Thyroid gland (tissue), 4 donors: ENCODE measurements at regions of chr4 and their contacts with region 1.

Region 1: GRCh38 chr4:41692717-41693345 is 55.7 kb downstream of the PHOX2B start:
- DNase-seq: peak; percentile 12 to 16
- H3K4me3 ChIP-seq: no peak overlapping the region
- H3K27ac ChIP-seq: no peak overlapping the region
- H3K4me1 ChIP-seq: peaks cover 0 to 5% of the 10 kb centered on the region in 2 donors
- H3K27me3 ChIP-seq: no peaks in the 10 kb centered on the region
- CTCF ChIP-seq: peak; percentile 30 to 71 (median 50)
- POLR2A ChIP-seq: no peak

Region 2: DNA sequence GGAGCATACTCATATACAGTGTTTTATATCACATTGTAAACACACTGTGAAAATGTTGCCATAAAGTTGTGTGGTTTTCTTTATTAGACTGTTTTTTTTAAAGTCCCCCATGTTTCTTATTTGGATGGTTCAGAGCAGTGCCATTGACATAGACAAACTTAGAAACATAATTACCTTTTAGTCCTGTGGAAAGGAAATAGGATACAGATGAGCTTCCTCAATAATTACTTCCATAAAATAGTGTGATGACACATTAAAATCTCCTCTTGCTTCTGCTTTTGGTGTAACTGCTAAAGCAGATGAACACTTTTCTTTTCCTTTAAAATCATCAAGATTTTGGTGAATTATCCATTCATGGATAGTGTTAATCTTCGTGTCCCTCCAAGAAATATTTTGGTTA is 207.8 kb before region 1 on chr4:
- intact Hi-C with region 1: no loop called
- DNase-seq: no peak
- H3K4me3 ChIP-seq: no peak overlapping the region
- H3K27ac ChIP-seq: no peak overlapping the region
- H3K4me1 ChIP-seq: peaks cover 14 to 16% of the 10 kb centered on the region in 2 donors
- H3K27me3 ChIP-seq: no peaks in the 10 kb centered on the region
- CTCF ChIP-seq: no peak
- POLR2A ChIP-seq: no peak

Region 3: DNA sequence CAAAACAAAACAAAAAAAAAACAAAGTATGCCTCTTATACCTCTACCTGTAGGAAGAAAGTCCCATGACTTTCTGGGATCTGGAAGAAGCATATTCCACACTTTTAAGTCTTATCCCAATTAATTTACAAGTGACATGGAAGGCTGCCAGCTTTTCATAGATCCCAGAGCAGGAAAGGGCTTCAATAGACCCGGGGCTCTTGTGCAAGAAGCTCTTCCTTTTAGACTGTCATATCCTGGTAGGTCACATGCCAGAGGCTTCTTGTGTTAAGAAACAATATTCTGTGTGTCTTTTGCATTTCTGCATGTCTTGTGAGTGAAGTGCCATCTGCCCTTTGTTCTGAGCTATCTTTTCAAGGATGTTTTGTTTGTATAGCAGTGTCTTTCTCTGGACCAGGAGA is 140.1 kb after region 1 on chr4:
- intact Hi-C with region 1: no loop called
- DNase-seq: no peak
- H3K4me3 ChIP-seq: no peak overlapping the region
- H3K27ac ChIP-seq: no peak overlapping the region
- H3K4me1 ChIP-seq: no peaks in the 10 kb centered on the region
- H3K27me3 ChIP-seq: no peaks in the 10 kb centered on the region
- CTCF ChIP-seq: no peak
- POLR2A ChIP-seq: no peak

Region 4: DNA sequence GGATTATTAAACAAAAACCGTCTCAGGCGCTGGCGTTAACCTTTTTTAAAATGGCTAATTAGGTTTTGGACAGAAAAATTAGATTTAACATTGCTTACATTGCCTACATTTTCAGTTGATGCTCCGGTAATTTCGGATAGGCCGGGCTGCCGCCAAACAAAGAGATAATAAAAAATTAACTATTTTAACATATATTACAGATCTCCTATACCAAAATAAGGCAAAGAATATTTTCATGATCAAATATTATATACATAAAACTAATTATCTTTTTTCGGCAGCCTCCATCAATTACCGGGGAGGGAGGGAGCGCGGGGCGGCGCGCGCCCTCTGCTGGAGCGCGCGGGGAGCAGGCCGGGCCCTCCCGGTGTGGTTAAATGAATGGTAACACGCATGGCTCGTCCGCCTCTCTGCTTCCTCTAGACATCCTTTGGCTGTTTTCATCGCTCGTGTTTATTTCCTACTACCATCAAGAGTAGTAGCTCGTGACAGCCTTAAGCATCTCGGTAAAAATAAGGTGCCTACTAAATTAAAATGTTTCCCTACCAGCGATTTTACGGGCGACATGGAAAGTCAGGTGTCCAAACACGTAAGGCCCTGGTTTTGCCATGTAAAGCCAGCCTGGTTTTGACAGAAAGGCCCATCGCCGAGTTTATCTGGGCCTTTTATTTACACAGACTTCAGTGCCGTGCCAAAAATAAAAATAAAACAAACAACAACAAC is 190.0 kb after region 1 on chr4:
- intact Hi-C with region 1: loop called (anchors 10 kb)
- DNase-seq: peak; percentile 39 to 47
- H3K4me3 ChIP-seq: peak overlapping the region in 1 of 3 donors; percentile 28
- H3K27ac ChIP-seq: no peak overlapping the region
- H3K4me1 ChIP-seq: peaks cover 21 to 26% of the 10 kb centered on the region in 2 donors
- H3K27me3 ChIP-seq: peaks cover 19% of the 10 kb centered on the region
- CTCF ChIP-seq: peak; percentile 62 to 97 (median 78)
- POLR2A ChIP-seq: no peak

Region 5: DNA sequence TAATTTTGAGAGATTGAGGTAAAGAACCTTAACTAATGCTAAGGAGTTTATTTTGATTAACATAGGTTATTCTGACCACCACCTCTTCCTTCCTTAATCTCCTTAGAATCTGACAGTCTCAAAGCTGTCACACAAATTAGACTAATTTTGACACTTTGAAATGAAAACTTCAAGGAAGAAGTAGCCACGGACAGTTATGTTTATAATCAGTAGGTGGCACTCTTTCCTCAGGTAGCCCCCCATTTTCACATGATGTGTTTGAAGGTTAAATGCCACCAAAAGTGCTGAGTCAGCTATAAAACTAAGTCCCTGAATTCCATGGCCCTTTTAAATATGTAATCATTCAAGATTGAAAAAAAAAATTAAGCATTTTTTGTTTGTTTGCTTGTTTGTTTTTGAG is 264.8 kb after region 1 on chr4:
- intact Hi-C with region 1: no loop called
- DNase-seq: no peak
- H3K4me3 ChIP-seq: no peak overlapping the region
- H3K27ac ChIP-seq: no peak overlapping the region
- H3K4me1 ChIP-seq: no peaks in the 10 kb centered on the region
- H3K27me3 ChIP-seq: no peaks in the 10 kb centered on the region
- CTCF ChIP-seq: peak in 3 of 6 experiments; percentile 35 to 42 (median 39)
- POLR2A ChIP-seq: no peak